ENCODE measurements at regions of chr19 and their contacts with region 1.

Region 1: GRCh38 chr19:33407716-33408115 is 34.2 kb downstream of the CEBPG start:
- DNase-seq: no peak
- ATAC-seq: no peak
- H3K4me3 ChIP-seq: no peak overlapping the region
- H3K27ac ChIP-seq: no peak overlapping the region
- H3K4me1 ChIP-seq: peaks cover 14% of the 10 kb centered on the region
- H3K27me3 ChIP-seq: no peaks in the 10 kb centered on the region
- CTCF ChIP-seq: no peak
- POLR2A ChIP-seq: no peak

Region 2: DNA sequence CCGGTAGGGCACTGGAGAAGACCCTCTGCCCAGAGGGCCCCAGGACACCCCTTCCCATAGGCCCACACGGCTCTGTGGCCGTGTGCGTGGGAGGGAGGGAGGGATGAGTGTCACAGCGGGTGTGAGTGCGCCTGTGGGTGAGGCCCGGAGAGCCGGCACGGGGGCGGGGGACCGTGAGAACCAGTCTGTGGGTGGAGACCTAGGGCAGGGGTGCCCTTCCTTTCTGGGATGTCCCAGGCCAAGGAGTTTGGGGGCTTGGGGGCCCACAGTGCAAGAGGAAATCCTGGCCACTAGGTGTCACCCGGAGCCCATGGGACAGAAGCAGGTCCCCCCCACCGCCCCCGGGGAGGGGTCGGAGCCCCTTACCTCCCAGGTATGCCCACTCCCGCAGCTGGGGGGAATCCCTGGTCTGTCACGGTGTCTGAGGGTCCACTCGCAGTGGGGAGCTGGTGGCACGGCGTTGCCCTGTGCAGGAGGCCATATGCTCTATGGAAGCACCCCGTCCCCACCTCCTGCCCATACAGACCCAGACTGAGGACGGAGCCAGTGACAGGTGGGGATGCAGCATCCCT is 166.1 kb before region 1 on chr19:
- intact Hi-C with region 1: loop called (anchors 2 kb)
- DNase-seq: peak; percentile 28 to 49 (median 36)
- ATAC-seq: peak; percentile 33
- H3K4me3 ChIP-seq: no peak overlapping the region
- H3K27ac ChIP-seq: no peak overlapping the region
- H3K4me1 ChIP-seq: peaks cover 8% of the 10 kb centered on the region
- H3K27me3 ChIP-seq: no peaks in the 10 kb centered on the region
- CTCF ChIP-seq: peak; percentile 64 to 95 (median 77)
- POLR2A ChIP-seq: no peak

Region 3: DNA sequence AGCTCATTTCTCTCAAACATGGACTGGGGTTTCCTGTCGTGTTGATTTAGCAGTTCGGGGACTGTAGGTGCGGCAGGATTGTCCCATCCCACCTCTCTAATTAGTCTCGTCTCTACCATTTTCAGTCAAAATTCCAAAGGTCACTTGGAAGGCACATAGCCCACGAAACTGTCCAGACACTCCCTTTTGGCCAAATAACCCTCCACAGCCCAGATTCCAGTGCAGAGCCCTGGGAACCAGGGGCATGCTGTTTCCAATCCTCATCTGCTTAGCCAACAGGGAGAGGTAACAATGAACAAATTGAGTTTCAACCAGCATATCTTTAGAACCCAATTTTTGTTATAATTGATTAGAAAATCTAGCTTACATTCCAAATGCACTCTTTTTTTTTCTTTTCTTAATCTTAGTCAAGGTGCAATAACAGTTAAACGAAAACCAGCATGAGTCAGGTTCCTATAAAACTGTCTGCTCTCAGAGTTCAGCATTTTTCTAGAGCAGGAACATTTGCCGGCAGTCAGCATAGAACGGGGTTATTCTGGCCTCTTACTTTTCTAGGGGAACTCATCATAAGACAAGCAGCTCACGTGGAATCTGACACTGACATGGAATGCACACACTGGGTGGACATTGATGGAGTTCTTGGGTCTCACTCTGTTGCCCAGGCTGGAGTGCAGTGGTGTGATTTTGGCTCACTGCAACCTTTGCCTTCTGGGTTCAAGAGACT is 91.0 kb before region 1 on chr19:
- intact Hi-C with region 1: no loop called
- DNase-seq: no peak
- ATAC-seq: no peak
- H3K4me3 ChIP-seq: no peak overlapping the region
- H3K27ac ChIP-seq: no peak overlapping the region
- H3K4me1 ChIP-seq: peaks cover 4% of the 10 kb centered on the region
- H3K27me3 ChIP-seq: no peaks in the 10 kb centered on the region
- CTCF ChIP-seq: no peak
- POLR2A ChIP-seq: no peak

Measured in body of pancreas (tissue), 4 donors.